CD4-positive, alpha-beta T cell (primary cell): ENCODE measurements at regions of chr1 and their contacts with region 1.

Region 1: DNA sequence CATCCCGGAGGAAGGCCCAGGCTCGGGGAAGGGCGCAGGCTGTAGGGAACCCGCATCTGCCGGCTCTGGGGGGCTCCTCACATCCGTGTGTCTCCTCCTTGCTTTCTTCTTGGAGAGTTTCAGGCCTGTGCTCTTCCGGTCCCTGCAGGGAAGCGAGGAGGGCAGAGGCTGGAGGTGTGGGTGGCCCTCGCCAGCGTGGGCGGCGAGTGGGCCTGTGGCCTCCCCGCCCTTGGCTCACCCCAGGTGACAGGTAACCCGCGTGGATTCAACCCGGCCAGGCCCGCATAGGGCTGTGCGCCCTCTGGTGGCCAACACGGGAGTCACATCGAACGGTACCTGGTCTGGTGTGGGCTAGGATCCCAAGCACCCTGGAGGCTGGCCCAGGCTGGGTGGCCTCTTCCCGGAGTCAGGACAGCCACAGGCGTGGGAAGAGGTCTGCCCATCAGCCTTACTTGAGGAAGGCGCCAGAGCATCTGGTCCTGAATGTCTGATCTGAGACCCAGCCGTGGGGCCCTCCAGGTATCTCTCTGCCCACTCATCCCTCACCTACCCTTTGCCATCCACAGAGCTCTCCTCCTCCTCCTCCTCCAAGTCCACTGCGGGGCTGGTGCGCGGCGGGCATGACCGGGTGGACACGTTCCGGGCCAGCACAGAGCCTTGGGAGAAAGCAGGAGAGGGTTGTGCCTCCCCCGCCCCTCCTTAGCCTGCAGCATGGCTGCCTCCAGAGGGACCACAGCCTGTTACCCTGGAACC is 9.6 kb upstream of the TNFRSF25 start:
- DNase-seq: peak; percentile 72 to 90 (median 82)
- ATAC-seq: peak; percentile 97
- H3K4me3 ChIP-seq: no peak overlapping the region
- H3K4me3 Mint-ChIP-seq: peak overlapping the region; percentile 56
- H3K27ac ChIP-seq: no peak overlapping the region
- H3K27ac Mint-ChIP-seq: no peak overlapping the region
- H3K4me1 ChIP-seq: peaks cover 13% of the 10 kb centered on the region
- H3K4me1 Mint-ChIP-seq: peaks cover 8% of the 10 kb centered on the region
- H3K27me3 ChIP-seq: no peaks in the 10 kb centered on the region
- H3K27me3 Mint-ChIP-seq: no peaks in the 10 kb centered on the region
- CTCF ChIP-seq: peak; percentile 88

Region 2: GRCh38 chr1:6245086-6245868 is 230.3 kb before region 1 on chr1:
- CTCF ChIA-PET with region 1: no interaction called
- POLR2A ChIA-PET with region 1: no interaction called
- intact Hi-C with region 1: loop called (anchors 1 kb)
- DNase-seq: peak; percentile 61 to 92 (median 76)
- ATAC-seq: peak; percentile 80
- H3K4me3 ChIP-seq: no peak overlapping the region
- H3K4me3 Mint-ChIP-seq: no peak overlapping the region
- H3K27ac ChIP-seq: no peak overlapping the region
- H3K27ac Mint-ChIP-seq: no peak overlapping the region
- H3K4me1 ChIP-seq: peaks cover 35% of the 10 kb centered on the region
- H3K4me1 Mint-ChIP-seq: peaks cover 22% of the 10 kb centered on the region
- H3K27me3 ChIP-seq: peaks cover 74 to 85% of the 10 kb centered on the region in 2 experiments
- H3K27me3 Mint-ChIP-seq: peaks cover 70% of the 10 kb centered on the region
- CTCF ChIP-seq: peak; percentile 58

Region 3: DNA sequence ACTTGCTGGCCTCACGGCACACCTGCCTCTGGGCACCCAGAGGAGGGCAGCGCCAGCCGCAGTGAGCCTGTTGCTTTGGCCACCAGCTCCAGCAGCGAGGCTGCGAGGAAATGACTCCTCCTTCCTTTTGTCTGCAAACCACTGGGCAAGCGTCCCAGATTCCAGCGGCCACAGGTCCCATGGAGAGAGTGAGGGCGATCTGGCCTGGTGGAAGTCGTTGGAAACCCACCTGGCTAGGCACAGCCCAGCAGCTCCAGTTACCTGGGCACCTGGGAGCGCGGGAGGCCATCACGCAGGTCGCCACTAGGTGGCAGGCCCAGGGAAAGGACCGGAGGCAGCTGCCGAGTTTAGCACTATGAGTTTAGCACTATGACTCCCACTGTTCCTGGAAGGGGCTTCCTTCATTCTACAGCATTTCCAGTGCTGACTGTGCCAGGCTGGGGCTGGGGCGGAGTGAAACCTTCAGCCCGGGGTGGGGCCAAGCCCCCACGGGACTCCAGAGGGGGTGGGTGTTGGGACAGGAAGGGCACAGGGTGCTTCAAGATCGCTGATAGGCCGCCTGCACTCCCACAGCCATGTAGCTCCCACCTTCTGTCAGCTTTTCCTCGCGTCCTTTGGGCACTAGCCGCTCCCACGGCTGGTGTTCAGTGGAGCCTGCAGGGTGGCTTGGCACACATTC is 52.1 kb before region 1 on chr1:
- CTCF ChIA-PET with region 1: interaction called, 6 read pairs
- POLR2A ChIA-PET with region 1: no interaction called
- intact Hi-C with region 1: loop called (anchors 1 to 2 kb)
- DNase-seq: peak; percentile 60 to 85 (median 72)
- ATAC-seq: peak; percentile 85
- H3K4me3 ChIP-seq: peak overlapping the region; percentile 33
- H3K4me3 Mint-ChIP-seq: peak overlapping the region; percentile 67
- H3K27ac ChIP-seq: no peak overlapping the region
- H3K27ac Mint-ChIP-seq: no peak overlapping the region
- H3K4me1 ChIP-seq: peaks cover 48% of the 10 kb centered on the region
- H3K4me1 Mint-ChIP-seq: peaks cover 13% of the 10 kb centered on the region
- H3K27me3 ChIP-seq: peaks cover 53 to 69% of the 10 kb centered on the region in 2 experiments
- H3K27me3 Mint-ChIP-seq: peaks cover 55% of the 10 kb centered on the region
- CTCF ChIP-seq: peak; percentile 85

Region 4: DNA sequence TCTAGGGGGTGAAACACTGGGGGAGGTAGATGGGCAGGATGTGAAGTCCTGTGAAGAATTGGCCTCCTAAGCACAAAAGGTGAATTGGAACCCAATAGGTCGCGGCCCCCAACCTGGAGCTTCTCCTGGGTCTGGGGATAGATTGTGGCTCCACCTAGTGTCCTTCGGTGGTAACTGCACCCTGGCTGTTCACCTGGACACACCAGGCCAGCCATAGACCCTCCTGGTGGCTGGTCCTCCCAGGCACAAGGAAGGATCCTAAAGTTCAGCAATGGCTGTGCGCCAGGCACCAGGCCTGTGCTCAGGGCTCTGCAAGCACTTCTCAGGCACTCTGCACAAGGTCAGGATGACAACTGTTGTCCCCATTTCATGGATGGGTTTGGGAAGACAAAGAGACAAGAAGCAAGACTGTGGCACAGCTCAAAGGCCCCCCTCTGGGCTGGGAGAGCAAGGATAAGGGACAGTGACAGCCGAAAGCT is 37.5 kb before region 1 on chr1:
- CTCF ChIA-PET with region 1: interaction called, 5 read pairs
- POLR2A ChIA-PET with region 1: no interaction called
- intact Hi-C with region 1: loop called in 1 of 2 experiments (anchors 5 kb)
- DNase-seq: peak; percentile 56 to 85 (median 66)
- ATAC-seq: peak; percentile 65
- H3K4me3 ChIP-seq: no peak overlapping the region
- H3K4me3 Mint-ChIP-seq: peak overlapping the region; percentile 65
- H3K27ac ChIP-seq: no peak overlapping the region
- H3K27ac Mint-ChIP-seq: no peak overlapping the region
- H3K4me1 ChIP-seq: peaks cover 15% of the 10 kb centered on the region
- H3K4me1 Mint-ChIP-seq: peaks cover 9% of the 10 kb centered on the region
- H3K27me3 ChIP-seq: peaks cover 10 to 11% of the 10 kb centered on the region in 2 experiments
- H3K27me3 Mint-ChIP-seq: peaks cover 28% of the 10 kb centered on the region
- CTCF ChIP-seq: peak; percentile 97

Region 5: DNA sequence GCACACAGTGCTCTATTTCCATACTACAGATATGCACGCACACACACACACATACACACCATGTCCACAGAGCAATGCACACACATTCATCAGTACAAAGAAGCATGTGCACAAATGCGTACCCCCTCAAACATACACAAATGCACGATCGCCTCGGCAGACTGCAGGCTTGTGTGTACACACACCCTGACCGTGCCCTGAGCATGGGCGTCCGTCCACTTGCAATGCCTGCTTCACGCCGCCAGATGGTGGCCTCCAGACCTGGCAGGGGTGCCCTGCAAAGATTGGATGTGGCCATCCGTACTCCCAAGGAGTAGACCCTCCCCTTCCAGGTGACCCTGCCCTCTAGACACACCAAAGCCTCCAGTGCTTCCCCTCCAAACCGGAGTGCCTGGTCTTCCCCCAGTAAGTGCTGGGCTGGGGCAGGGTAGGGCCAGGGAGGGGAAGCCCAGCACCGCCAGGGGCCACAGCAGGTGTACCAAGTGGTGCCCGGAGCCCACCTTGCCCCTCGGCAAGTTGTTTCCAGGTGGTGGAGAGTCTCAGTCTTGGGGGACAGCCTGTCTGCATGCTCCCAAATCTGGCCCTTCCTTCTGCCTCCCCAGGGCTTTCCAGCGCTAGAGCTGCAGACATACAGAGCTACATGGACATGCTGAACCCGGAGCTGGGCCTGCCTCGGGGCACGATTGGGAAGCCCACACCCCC is 30.3 kb before region 1 on chr1:
- CTCF ChIA-PET with region 1: interaction called, 13 read pairs
- POLR2A ChIA-PET with region 1: no interaction called
- intact Hi-C with region 1: loop called in 1 of 2 experiments (anchors 2 kb)
- DNase-seq: peak in 10 of 14 experiments; percentile 35 to 71 (median 44)
- ATAC-seq: peak; percentile 16
- H3K4me3 ChIP-seq: no peak overlapping the region
- H3K4me3 Mint-ChIP-seq: no peak overlapping the region
- H3K27ac ChIP-seq: no peak overlapping the region
- H3K27ac Mint-ChIP-seq: no peak overlapping the region
- H3K4me1 ChIP-seq: peaks cover 51% of the 10 kb centered on the region
- H3K4me1 Mint-ChIP-seq: peaks cover 27% of the 10 kb centered on the region
- H3K27me3 ChIP-seq: peaks cover 41 to 55% of the 10 kb centered on the region in 2 experiments
- H3K27me3 Mint-ChIP-seq: peaks cover 47% of the 10 kb centered on the region
- CTCF ChIP-seq: peak; percentile 39

Region 6: DNA sequence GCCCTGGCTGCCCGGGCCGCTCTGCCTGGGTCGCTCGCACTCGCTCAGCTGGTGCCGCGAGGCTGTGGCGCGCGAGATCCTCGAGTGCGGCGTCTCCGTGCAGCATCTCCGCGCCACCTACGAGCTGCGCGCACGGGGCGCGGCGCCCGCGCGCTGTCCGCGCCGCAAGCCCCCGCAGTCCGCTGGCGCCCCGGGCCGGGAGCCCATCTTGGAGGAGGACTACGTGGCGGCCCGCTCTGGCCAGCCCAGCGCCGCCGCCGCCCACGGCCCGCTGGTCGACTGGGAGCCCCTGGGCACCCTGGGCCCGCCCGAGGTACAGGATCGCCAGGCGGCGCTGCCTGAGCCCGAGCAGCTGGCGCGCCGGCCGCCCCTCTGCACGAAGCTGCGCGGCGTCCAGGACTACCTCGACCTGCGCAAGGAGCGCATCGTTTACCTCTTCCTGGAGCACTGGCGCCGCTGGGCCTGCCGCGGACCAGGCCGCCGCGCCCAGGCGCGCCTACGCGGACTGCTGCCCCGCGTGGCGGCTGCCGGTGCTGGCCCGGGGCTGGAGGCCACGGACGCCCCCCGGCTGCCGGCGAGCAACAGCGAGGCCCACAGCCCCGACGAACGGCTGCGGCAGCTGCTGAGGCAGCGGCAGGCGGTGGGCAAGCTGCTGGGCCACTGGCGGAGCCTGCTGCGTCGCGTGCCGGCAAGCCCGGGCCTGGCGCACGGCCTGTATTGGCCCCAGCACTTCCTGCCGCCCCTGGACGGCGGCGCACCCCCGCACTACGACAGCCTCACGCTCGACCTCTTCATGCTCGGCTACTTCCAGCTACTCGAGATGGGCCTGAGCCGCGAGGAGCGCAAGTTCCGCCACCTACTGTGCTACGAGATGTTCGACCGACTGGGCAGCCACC is 20.5 kb before region 1 on chr1:
- CTCF ChIA-PET with region 1: interaction called, 12 read pairs
- POLR2A ChIA-PET with region 1: interaction called, 3 read pairs
- intact Hi-C with region 1: loop called (anchors 1 to 2 kb)
- DNase-seq: peak in 10 of 14 experiments; percentile 36 to 82 (median 54)
- ATAC-seq: peak; percentile 21
- H3K4me3 ChIP-seq: no peak overlapping the region
- H3K4me3 Mint-ChIP-seq: no peak overlapping the region
- H3K27ac ChIP-seq: no peak overlapping the region
- H3K27ac Mint-ChIP-seq: no peak overlapping the region
- H3K4me1 ChIP-seq: peaks cover 30% of the 10 kb centered on the region
- H3K4me1 Mint-ChIP-seq: peaks cover 36% of the 10 kb centered on the region
- H3K27me3 ChIP-seq: peaks cover 10 to 16% of the 10 kb centered on the region in 2 experiments
- H3K27me3 Mint-ChIP-seq: peaks cover 30% of the 10 kb centered on the region
- CTCF ChIP-seq: no peak

Region 7: DNA sequence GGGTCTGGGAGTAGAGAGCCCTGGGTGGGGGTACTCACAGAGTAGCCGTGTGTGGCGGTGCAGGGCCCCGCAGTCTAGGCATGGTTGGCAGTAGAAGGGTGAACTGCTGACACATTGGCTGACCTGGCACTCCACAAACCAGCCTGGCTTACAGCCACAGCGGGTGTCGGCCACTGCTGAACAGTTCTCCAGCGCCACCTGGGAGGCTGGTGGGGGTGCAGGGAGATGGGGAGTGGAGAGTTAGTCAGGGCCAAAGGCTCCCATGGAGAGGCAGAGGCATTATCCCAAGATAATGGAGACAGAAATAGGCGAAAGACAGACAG is 11.1 kb before region 1 on chr1:
- CTCF ChIA-PET with region 1: interaction called, 12 read pairs
- POLR2A ChIA-PET with region 1: interaction called, 3 read pairs
- intact Hi-C with region 1: loop called in 1 of 2 experiments (anchors 1 kb)
- DNase-seq: peak in 11 of 14 experiments; percentile 26 to 75 (median 58)
- ATAC-seq: no peak
- H3K4me3 ChIP-seq: peak overlapping the region; percentile 83
- H3K4me3 Mint-ChIP-seq: peak overlapping the region; percentile 98
- H3K27ac ChIP-seq: peak overlapping the region; percentile 90 to 97
- H3K27ac Mint-ChIP-seq: peak overlapping the region; percentile 96
- H3K4me1 ChIP-seq: peaks cover 68% of the 10 kb centered on the region
- H3K4me1 Mint-ChIP-seq: peaks cover 61% of the 10 kb centered on the region
- H3K27me3 ChIP-seq: no peaks in the 10 kb centered on the region
- H3K27me3 Mint-ChIP-seq: no peaks in the 10 kb centered on the region
- CTCF ChIP-seq: no peak

Region 8: DNA sequence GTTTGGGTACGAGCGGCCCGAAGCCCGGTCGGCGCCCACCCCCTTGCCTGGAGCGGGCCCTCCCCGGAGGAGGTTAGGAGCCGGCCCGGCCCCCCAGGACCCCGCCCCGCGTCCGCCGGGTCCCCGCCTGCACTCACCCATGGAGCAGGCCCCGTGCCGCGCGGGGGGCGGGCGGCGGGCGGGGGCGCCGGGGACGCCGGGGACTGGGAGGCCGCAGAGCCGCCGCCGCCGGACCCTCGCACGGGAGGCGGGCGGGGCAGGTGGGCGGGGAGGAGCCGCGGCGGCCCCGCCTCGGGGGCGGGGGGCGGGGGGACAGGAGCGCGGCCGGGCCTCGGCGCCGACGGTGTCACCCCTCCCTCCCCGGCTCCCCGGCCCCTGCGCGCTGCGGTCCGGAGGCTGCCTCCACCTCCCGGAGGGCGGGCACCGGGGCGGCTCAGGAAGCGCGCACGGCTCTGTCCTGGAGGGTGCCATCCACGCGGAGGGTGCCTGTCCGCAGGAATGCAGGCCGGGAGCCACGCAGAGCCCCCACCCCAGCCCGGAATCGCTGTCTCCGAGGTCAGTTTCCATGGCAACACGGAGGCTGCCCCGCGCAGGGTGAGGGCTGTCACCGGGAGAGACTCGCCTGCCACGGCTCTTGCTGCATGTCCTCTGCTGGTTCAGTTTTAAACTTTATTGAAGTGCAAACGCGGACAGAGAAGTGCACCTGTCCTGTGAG is 21.8 kb after region 1 on chr1:
- CTCF ChIA-PET with region 1: no interaction called
- POLR2A ChIA-PET with region 1: no interaction called
- intact Hi-C with region 1: no loop called
- DNase-seq: peak; percentile 33 to 81 (median 51)
- ATAC-seq: peak; percentile 66
- H3K4me3 ChIP-seq: peak overlapping the region; percentile 75
- H3K4me3 Mint-ChIP-seq: peak overlapping the region; percentile 84
- H3K27ac ChIP-seq: no peak overlapping the region
- H3K27ac Mint-ChIP-seq: no peak overlapping the region
- H3K4me1 ChIP-seq: peaks cover 40% of the 10 kb centered on the region
- H3K4me1 Mint-ChIP-seq: peaks cover 27% of the 10 kb centered on the region
- H3K27me3 ChIP-seq: no peaks in the 10 kb centered on the region
- H3K27me3 Mint-ChIP-seq: peaks cover 10% of the 10 kb centered on the region
- CTCF ChIP-seq: no peak